Activated CD4-positive, alpha-beta T cell treated with anti-CD3 and anti-CD28 coated beads for 36 hours (primary cell): ENCODE measurements at regions of chr2 and their contacts with region 1.

Region 1: DNA sequence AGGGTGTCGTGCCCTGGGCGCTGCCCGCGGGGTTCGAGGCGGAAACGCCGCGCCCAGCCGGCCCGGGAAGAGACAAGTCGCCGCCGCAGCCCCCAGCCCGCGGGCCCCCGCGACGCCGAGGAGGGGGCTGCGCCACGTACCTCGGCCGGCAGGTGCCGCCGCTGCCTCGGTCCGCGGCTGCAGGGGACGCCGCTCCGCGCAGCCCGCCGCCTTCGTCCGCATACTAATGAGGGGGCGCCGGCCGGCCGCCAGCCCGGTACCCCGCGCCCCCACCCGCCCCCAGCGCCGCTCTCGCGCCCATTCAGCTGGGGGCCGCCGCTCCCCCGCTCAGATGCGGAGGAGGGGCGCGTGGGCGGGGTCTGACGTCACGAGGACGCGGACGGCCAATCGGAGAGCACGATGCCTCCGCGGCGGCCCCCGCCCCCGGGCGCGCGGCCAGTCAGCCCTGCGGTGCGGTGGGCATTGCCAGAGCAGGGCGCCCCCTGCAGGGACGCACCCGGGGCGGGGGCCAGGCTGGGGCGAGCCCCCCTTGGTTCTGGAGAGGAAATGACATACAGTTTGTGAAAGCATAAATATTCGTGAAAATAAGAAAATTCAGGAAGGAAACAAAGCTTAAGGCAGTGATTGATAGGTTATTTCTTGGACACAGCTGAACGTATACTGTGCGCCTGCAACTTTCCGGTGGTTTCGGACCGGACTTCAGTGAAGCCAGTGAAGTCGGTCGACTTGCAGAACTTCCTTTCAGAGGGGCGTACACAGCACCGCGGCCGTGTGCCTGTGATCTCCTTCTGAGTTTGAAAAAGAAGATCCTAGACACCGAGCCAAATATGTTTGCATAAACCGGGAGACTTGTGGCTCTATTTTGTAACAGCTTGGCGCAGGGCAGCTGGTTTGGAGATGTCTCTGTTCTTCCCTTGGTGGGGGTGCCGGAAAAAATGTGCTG is at the start of gene ST3GAL5:
- DNase-seq: peak; percentile 92
- ATAC-seq: peak; percentile 78
- H3K4me3 Mint-ChIP-seq: peak within 1 kb of the TSS; percentile 75
- H3K27ac Mint-ChIP-seq: peak within 1 kb of the TSS; percentile 75
- H3K4me1 Mint-ChIP-seq: peaks cover 46% of the 10 kb centered on the region
- H3K27me3 Mint-ChIP-seq: no peaks in the 10 kb centered on the region
- total RNA-seq, gene ST3GAL5: 6.2 to 7.3 TPM

Region 2: GRCh38 chr2:85792783-85793441 is 96.0 kb before region 1 on chr2:
- CTCF ChIA-PET with region 1: no interaction called
- POLR2A ChIA-PET with region 1: no interaction called
- intact Hi-C with region 1: no loop called
- DNase-seq: no peak
- ATAC-seq: no peak
- H3K4me3 Mint-ChIP-seq: no peak overlapping the region
- H3K27ac Mint-ChIP-seq: no peak overlapping the region
- H3K4me1 Mint-ChIP-seq: no peaks in the 10 kb centered on the region
- H3K27me3 Mint-ChIP-seq: peaks cover 7% of the 10 kb centered on the region

Region 3: DNA sequence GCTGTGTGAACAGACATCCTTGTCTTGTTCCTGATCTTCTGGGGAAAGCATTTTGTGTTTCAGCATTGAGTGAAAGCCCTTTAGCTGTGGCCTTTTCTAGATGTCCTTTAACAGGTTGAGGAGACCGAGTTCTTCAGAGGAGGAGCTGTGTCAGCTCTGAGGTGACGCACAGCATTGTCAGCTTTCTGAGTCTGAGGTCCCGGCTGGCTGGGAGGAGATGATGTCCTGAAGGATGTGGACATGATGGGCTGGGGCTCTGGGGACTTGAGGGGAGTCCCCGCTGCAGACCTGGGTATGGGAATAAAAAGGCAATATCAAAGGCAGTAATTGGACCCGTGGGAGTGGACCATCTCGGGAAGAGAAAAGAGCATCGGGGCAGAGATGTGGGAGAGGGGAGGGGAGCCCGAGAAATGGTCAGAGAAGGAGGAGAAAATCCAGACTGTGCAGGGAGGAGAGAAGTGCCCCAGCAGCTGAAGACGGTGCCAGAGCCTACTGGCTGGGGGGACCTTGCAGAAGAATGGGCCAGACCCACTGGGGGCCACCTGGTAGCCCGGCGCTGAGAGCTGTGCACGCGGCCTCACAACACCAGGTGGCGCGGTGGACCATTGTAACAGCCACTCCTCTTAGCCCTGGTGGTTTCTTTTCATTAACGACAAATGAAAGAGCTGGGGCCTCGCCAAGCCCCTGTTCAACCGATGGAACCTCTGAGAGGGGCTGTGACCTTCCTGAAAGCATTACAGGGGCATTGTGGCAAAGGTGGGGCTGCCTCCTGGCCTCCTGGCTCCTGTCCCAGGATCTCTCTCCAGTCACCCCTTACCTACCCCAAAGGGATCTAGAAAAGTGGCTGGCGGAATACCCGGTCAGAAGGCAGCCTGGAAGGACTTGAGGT is 61.7 kb before region 1 on chr2:
- CTCF ChIA-PET with region 1: interaction called, 71 read pairs
- POLR2A ChIA-PET with region 1: no interaction called
- intact Hi-C with region 1: loop called (anchors 1 kb)
- DNase-seq: peak; percentile 90
- ATAC-seq: peak; percentile 93
- H3K4me3 Mint-ChIP-seq: no peak overlapping the region
- H3K27ac Mint-ChIP-seq: peak overlapping the region; percentile 10
- H3K4me1 Mint-ChIP-seq: peaks cover 15% of the 10 kb centered on the region
- H3K27me3 Mint-ChIP-seq: no peaks in the 10 kb centered on the region

Region 4: GRCh38 chr2:85878719-85879385 is 10.1 kb before region 1 on chr2:
- CTCF ChIA-PET with region 1: interaction called, 13 read pairs
- POLR2A ChIA-PET with region 1: no interaction called
- intact Hi-C with region 1: no loop called
- DNase-seq: no peak
- ATAC-seq: no peak
- H3K4me3 Mint-ChIP-seq: no peak overlapping the region
- H3K27ac Mint-ChIP-seq: peak overlapping the region; percentile 27
- H3K4me1 Mint-ChIP-seq: peaks cover 34% of the 10 kb centered on the region
- H3K27me3 Mint-ChIP-seq: no peaks in the 10 kb centered on the region

Region 5: DNA sequence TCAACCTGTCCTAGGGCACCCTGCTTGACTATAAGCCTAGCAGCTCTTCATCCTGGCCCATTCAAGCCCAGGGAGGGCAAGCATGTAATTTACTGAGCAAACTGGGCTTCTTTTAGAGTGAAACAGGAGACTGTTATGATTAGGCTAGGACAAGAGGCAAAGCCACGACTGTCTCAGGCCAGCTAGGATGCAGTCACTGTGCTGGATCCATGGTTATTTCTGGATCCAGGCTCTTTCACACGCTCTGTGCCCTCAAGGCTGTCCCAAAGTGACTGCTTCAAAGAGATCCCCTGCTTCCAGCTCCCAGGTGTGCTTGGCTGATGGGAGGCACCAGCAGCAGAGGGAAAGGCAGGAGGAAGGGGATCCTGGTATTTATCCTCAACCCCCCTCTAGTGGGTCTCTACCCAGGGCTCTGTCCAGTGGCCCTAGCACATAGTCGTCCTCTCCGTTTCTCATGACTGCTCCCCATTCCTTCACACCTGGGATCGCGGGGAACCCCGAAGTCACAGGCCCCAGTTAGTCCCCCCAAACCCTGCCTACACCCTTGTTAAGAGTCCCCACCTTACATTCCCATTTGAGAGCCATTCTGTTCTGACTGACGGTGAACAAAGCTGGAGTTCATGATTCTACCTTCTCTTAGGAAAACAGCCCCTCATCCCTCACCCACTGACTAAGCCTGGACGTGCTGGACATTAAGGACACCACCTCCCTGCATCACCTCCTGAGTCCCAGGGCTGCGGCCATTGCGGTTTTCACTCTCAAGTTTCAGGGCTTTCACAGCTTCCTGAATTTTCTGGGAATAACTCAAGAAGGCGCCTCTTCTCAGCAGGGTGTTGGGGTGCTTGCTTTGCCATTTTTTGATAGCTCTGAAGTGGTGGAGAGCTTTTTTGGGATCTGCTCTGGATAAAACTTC is 153.6 kb after region 1 on chr2:
- CTCF ChIA-PET with region 1: interaction called, 11 read pairs
- POLR2A ChIA-PET with region 1: interaction called, 8 read pairs
- intact Hi-C with region 1: loop called (anchors 1 to 2 kb)
- DNase-seq: no peak
- ATAC-seq: no peak
- H3K4me3 Mint-ChIP-seq: no peak overlapping the region
- H3K27ac Mint-ChIP-seq: peak overlapping the region; percentile 35
- H3K4me1 Mint-ChIP-seq: peaks cover 52% of the 10 kb centered on the region
- H3K27me3 Mint-ChIP-seq: no peaks in the 10 kb centered on the region

Region 6: DNA sequence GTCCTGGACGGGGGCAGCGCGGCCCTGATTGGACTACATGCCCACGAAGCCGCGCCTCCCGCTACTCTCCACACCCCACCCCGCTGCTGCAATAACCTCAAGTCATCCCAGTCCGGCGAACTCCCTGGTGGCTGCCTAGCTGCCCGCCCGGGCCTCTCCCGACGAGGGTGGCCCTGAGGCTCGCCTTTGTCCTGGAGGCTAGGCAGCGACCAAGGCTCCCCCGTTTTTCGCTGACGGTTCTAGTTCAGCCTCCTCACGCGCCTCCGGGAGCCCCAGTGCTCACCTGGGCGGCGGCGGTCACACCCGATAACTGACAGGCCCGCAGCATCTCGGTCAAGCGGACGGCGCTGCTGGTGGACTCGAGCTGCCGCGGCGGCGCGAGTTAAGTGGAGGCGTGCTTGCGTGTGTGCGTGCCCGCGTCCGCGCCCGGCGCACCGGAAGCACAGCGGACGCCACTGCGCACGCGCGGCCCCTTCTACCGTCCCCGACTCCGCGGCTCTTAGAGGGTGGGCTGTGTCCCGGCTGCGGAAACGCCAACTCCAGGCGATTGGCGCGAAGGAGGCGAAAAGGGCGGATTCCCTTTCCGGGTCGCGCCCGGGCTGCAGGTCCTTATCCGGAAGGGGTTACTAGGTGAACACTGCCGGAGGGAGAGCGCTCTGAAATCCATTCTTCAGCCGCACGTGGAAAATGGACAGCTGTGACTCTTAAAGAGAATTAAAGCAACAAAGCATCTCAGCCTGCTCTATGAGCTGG is 306.3 kb after region 1 on chr2 and contains the start of gene IMMT:
- CTCF ChIA-PET with region 1: no interaction called
- POLR2A ChIA-PET with region 1: no interaction called
- intact Hi-C with region 1: loop called (anchors 2 to 10 kb)
- DNase-seq: peak; percentile 97
- ATAC-seq: peak; percentile 93
- H3K4me3 Mint-ChIP-seq: peak within 1 kb of the TSS; percentile 81
- H3K27ac Mint-ChIP-seq: peak within 1 kb of the TSS; percentile 92
- H3K4me1 Mint-ChIP-seq: peaks cover 44% of the 10 kb centered on the region
- H3K27me3 Mint-ChIP-seq: no peaks in the 10 kb centered on the region
- total RNA-seq, gene IMMT: 172 to 182 TPM